Motor neuron (in vitro differentiated cells): ENCODE measurements at regions of chr20 and their contacts with region 1.

Region 1: DNA sequence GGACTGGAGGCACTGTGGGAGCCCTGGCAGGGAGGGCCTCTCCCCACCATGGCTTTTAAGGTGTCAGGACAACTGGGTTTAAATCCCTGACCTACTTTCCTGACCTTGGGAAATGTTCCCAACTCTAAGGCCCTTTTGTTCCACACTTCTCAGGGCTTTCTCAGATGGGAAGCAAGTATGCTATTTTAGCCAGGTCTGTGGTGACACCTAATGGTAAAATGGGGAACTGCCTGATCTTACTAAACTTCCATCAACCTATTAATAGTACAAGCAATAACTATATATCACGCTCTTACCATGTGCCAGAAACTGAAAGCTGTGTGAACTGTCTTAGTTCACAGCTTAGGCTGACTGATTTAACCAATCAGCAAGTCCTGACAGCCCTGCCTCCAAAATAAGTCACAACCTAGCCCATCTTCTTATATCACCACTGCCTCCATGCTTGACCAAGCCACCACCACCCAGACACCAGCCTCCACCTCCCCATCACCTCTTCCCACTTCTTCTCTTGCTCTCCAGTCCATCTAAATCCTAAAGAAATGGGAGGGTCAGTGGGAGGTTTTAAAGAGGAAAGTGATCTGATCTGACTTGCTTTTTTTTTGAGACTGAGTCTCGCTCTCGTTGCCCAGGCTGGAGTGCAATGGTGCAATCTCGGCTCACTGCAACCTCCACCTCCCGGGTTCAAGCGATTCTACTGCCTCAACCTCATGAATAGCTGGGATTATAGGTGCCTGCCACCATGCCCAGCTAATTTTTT is 6.9 kb upstream of the BLCAP start:
- ATAC-seq: peak; percentile 86 to 97 (median 94)
- H3K4me3 ChIP-seq: no peak overlapping the region
- H3K27ac ChIP-seq: no peak overlapping the region
- H3K4me1 ChIP-seq: peaks cover 2 to 4% of the 10 kb centered on the region in 2 donors

Region 2: DNA sequence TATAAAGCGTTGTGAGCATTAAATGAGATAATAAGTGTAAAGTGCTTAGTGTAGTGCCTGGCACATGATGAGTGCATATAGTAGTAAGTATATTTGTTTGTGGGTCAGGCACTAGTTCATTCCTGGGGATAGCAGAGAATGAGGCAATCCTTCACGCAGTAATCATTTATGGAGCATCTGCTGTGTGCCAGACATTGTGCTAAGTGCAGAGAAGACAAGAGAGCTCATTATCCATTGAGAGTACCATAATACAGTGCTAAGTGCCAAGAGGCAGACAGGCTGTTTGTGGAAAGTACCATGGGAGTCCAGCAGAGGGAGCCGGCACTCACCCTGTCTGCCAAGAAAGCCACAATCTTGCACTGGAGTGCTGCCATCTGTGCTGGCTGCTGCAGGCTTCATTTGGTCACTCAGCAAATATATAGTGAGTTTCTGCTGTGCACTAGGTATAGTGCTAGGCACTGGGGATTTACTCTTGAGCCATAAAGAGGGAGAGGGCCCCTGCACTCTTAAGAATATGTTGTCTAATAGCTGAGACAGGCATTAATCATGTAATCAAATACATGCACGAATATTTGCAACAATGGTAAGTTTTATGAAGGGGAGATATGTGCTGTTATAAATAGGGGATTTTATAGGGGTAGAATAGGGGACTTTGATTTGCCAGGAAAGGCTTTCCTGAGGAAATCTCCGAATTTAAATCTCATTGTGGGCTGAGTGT is 342.3 kb before region 1 on chr20:
- in situ Hi-C with region 1: loop called in 4 of 9 experiments (anchors 10 kb)
- ATAC-seq: peak; percentile 85 to 93 (median 89)
- H3K4me3 ChIP-seq: no peak overlapping the region
- H3K27ac ChIP-seq: no peak overlapping the region
- H3K4me1 ChIP-seq: peaks cover 16 to 20% of the 10 kb centered on the region in 2 donors

Region 3: GRCh38 chr20:37265152-37265551 is 269.4 kb before region 1 on chr20:
- in situ Hi-C with region 1: loop called in 7 of 9 experiments (anchors 5 to 25 kb)
- ATAC-seq: no peak
- H3K4me3 ChIP-seq: no peak overlapping the region
- H3K27ac ChIP-seq: no peak overlapping the region
- H3K4me1 ChIP-seq: peaks cover 32 to 38% of the 10 kb centered on the region in 2 donors

Region 4: GRCh38 chr20:37276494-37277252 is 257.9 kb before region 1 on chr20:
- in situ Hi-C with region 1: loop called in 7 of 9 experiments (anchors 10 to 25 kb)
- ATAC-seq: peak in 3 of 8 experiments; percentile 95 to 98 (median 96)
- H3K4me3 ChIP-seq: no peak overlapping the region
- H3K27ac ChIP-seq: no peak overlapping the region
- H3K4me1 ChIP-seq: peaks cover 3 to 5% of the 10 kb centered on the region in 2 donors

Region 5: GRCh38 chr20:37384683-37385174 is 149.8 kb before region 1 on chr20:
- in situ Hi-C with region 1: loop called in 1 of 9 experiments (anchors 25 kb)
- ATAC-seq: peak; percentile 73 to 92 (median 88)
- H3K4me3 ChIP-seq: no peak overlapping the region
- H3K27ac ChIP-seq: no peak overlapping the region
- H3K4me1 ChIP-seq: peaks cover 0 to 3% of the 10 kb centered on the region in 2 donors

Region 6: GRCh38 chr20:37651932-37652331 is 117.4 kb after region 1 on chr20:
- in situ Hi-C with region 1: no loop called
- ATAC-seq: peak in 4 of 8 experiments; percentile 28 to 90 (median 58)
- H3K4me3 ChIP-seq: no peak overlapping the region
- H3K27ac ChIP-seq: no peak overlapping the region
- H3K4me1 ChIP-seq: peaks cover 11 to 21% of the 10 kb centered on the region in 2 donors